Activated CD4-positive, alpha-beta memory T cell treated with anti-CD3 and anti-CD28 coated beads for 36 hours (primary cell): ENCODE measurements at regions of chr1 and their contacts with region 1.

Region 1: GRCh38 chr1:16605532-16606505 is 7.5 kb downstream of the NBPF1 start:
- DNase-seq: no peak
- H3K4me3 Mint-ChIP-seq: no peak overlapping the region
- H3K27ac Mint-ChIP-seq: no peak overlapping the region
- H3K4me1 Mint-ChIP-seq: no peaks in the 10 kb centered on the region
- H3K27me3 Mint-ChIP-seq: no peaks in the 10 kb centered on the region

Region 2: DNA sequence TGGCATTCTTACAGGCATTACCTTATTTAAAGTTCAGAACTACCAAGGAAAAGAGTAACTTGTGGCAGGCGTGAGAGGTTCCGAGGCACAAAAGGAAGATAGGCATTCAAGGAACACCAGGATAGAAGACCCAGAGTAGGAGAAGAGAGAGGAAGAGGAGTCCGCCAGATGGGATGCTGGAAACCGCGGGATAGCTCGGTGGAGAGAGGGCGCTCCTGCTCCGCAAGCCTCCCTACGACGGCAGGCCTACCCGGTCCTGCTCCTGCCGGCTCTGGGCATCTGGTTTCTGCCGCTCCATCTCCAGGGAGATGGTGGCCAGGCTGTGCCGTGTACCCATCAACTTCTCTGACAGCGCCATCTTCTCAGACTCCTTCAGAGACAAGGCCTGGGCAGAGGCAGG is 12.9 kb after region 1 on chr1:
- CTCF ChIA-PET with region 1: interaction called, 20 read pairs
- POLR2A ChIA-PET with region 1: no interaction called
- intact Hi-C with region 1: no loop called
- DNase-seq: no peak
- H3K4me3 Mint-ChIP-seq: no peak overlapping the region
- H3K27ac Mint-ChIP-seq: no peak overlapping the region
- H3K4me1 Mint-ChIP-seq: no peaks in the 10 kb centered on the region
- H3K27me3 Mint-ChIP-seq: no peaks in the 10 kb centered on the region